IMR-90 (cell line): ENCODE measurements at regions of chr16 and their contacts with region 1.

Region 1: GRCh38 chr16:86563489-86564345 is 2.9 kb upstream of the FOXC2 start:
- DNase-seq: peak; percentile 89
- ATAC-seq: peak; percentile 70
- H3K4me3 ChIP-seq: peak overlapping the region; percentile 32
- H3K27ac ChIP-seq: 0 out of 2 replicates have a peak overlapping the region, but pooled peaks have one; percentile 18
- H3K4me1 ChIP-seq: peaks cover 2% of the 10 kb centered on the region; the same call in 1 of the 2 replicates
- H3K27me3 ChIP-seq: no peaks in the 10 kb centered on the region
- CTCF ChIP-seq: peak; percentile 100
- POLR2A ChIP-seq: peak; percentile 67
- RAD21 ChIP-seq: peak; percentile 100

Region 2: GRCh38 chr16:86882586-86883280 is 319.0 kb after region 1 on chr16:
- CTCF ChIA-PET with region 1: interaction called, 13 read pairs
- POLR2A ChIA-PET with region 1: no interaction called
- dilution Hi-C with region 1: no loop called
- in situ Hi-C with region 1: no loop called
- intact Hi-C with region 1: no loop called
- DNase-seq: peak; percentile 88
- ATAC-seq: peak; percentile 85
- H3K4me3 ChIP-seq: no peak overlapping the region
- H3K27ac ChIP-seq: no peak overlapping the region
- H3K4me1 ChIP-seq: peaks cover 5% of the 10 kb centered on the region
- H3K27me3 ChIP-seq: peaks cover 6% of the 10 kb centered on the region; the same call in 1 of the 2 replicates
- CTCF ChIP-seq: no peak
- POLR2A ChIP-seq: no peak
- RAD21 ChIP-seq: peak; percentile 27

Region 3: DNA sequence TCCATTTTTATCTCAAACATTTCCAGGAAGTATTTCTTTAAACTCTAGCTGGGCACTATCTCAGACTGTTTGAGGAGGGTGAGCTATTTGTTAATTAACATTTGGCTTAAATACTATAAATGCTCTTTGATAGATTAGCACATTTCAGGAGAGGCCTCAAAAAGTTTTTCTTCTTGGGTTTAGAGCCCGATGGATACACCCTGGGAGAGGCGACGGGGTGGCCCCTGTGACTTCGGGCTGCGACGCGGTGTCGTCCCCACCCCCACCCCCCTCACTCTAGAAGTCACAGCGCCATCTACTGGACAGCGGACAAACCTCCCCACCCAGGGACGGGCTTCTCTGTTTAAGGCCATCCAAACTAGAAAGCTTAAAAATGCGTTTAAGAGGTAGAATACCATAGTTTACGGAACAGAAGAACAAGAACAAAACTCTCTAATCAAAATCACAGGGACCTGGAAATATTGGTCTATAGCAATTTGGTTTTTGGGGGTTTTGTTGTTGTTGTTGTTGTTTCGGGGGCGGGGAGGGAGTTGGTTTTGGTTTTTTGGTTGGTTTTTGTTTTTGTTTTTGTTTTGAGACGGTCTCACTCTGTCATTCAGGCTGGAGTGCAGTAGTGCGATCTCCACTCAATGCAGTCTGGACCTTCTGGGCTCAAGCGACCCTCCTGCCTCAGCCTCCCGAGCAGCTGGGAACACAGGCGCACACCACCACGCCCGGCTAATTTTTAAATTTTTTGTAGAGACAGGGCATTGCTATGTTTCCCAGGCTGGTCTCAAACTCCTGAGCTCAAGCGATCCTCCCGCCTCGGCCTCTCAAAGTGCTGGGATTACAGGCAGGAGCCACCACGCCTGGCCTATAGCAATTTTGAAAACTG is 499.1 kb after region 1 on chr16:
- CTCF ChIA-PET with region 1: interaction called, 18 read pairs
- POLR2A ChIA-PET with region 1: no interaction called
- dilution Hi-C with region 1: no loop called
- in situ Hi-C with region 1: loop called (anchors 5 kb)
- intact Hi-C with region 1: loop called (anchors 1 kb)
- DNase-seq: peak; percentile 67
- ATAC-seq: peak; percentile 92
- H3K4me3 ChIP-seq: peak overlapping the region; percentile 26; the same call in 1 of the 2 replicates
- H3K27ac ChIP-seq: no peak overlapping the region
- H3K4me1 ChIP-seq: no peaks in the 10 kb centered on the region; the same call in 1 of the 2 replicates
- H3K27me3 ChIP-seq: no peaks in the 10 kb centered on the region; the same call in 1 of the 2 replicates
- CTCF ChIP-seq: peak; percentile 91
- POLR2A ChIP-seq: no peak
- RAD21 ChIP-seq: peak; percentile 90

Region 4: DNA sequence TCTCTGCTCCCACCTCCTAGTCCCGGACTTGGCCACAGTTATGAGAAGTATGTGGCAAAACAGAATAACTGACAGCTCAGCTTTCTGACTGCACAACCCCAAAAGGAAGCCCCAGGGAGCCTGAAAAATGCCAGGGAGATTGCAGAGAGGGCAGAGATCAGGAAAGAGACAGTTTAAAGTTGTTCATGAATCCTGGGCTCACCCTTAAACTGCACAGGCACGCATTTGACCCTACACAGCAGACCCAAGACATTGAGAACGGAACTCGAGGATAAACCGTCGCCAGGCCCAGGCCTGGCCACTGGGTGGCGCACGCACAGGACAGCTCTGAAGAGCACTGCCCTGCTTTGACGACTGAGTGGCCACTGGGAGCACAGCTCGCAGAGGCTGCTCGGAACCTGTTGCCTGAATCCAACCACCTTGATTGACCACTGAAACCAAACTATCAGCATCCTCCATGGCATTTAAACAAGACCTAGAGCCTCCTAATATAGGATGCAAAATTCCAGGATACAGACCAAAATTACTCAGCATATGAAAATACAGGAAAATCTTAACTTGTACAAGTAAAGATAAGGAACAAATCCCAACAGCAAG is 639.4 kb after region 1 on chr16:
- CTCF ChIA-PET with region 1: no interaction called
- POLR2A ChIA-PET with region 1: no interaction called
- dilution Hi-C with region 1: no loop called
- in situ Hi-C with region 1: no loop called
- intact Hi-C with region 1: loop called (anchors 1 kb)
- DNase-seq: peak; percentile 77
- ATAC-seq: peak; percentile 66
- H3K4me3 ChIP-seq: no peak overlapping the region
- H3K27ac ChIP-seq: peak overlapping the region; percentile 27
- H3K4me1 ChIP-seq: peaks cover 28% of the 10 kb centered on the region
- H3K27me3 ChIP-seq: no peaks in the 10 kb centered on the region
- CTCF ChIP-seq: peak; percentile 83
- POLR2A ChIP-seq: no peak
- RAD21 ChIP-seq: peak; percentile 65

Region 5: GRCh38 chr16:87278191-87279095 is 714.7 kb after region 1 on chr16:
- CTCF ChIA-PET with region 1: interaction called, 5 read pairs
- POLR2A ChIA-PET with region 1: no interaction called
- dilution Hi-C with region 1: no loop called
- in situ Hi-C with region 1: loop called (anchors 5 kb)
- intact Hi-C with region 1: loop called (anchors 1 kb)
- DNase-seq: peak; percentile 77
- ATAC-seq: peak; percentile 100
- H3K4me3 ChIP-seq: no peak overlapping the region
- H3K27ac ChIP-seq: no peak overlapping the region
- H3K4me1 ChIP-seq: no peaks in the 10 kb centered on the region; the same call in 1 of the 2 replicates
- H3K27me3 ChIP-seq: peaks cover 11% of the 10 kb centered on the region
- CTCF ChIP-seq: peak; percentile 94
- POLR2A ChIP-seq: no peak
- RAD21 ChIP-seq: peak; percentile 96

Region 6: GRCh38 chr16:87297918-87298631 is 734.4 kb after region 1 on chr16:
- CTCF ChIA-PET with region 1: no interaction called
- POLR2A ChIA-PET with region 1: no interaction called
- dilution Hi-C with region 1: no loop called
- in situ Hi-C with region 1: no loop called
- intact Hi-C with region 1: loop called (anchors 1 kb)
- DNase-seq: peak; percentile 10
- ATAC-seq: peak; percentile 85
- H3K4me3 ChIP-seq: no peak overlapping the region
- H3K27ac ChIP-seq: no peak overlapping the region
- H3K4me1 ChIP-seq: no peaks in the 10 kb centered on the region
- H3K27me3 ChIP-seq: no peaks in the 10 kb centered on the region
- CTCF ChIP-seq: peak; percentile 58
- POLR2A ChIP-seq: no peak
- RAD21 ChIP-seq: peak; percentile 46

Region 7: GRCh38 chr16:87383629-87384161 is 820.0 kb after region 1 on chr16 and contains the start of gene FBXO31:
- CTCF ChIA-PET with region 1: no interaction called
- POLR2A ChIA-PET with region 1: no interaction called
- dilution Hi-C with region 1: no loop called
- in situ Hi-C with region 1: no loop called
- intact Hi-C with region 1: loop called (anchors 5 kb)
- DNase-seq: peak; percentile 94
- ATAC-seq: peak; percentile 87
- H3K4me3 ChIP-seq: peak within 1 kb of the TSS; percentile 52
- H3K27ac ChIP-seq: peak within 1 kb of the TSS; percentile 72
- H3K4me1 ChIP-seq: peaks cover 16% of the 10 kb centered on the region
- H3K27me3 ChIP-seq: no peaks in the 10 kb centered on the region
- CTCF ChIP-seq: no peak; the same call in 1 of the 2 replicates
- POLR2A ChIP-seq: peak; percentile 69
- RAD21 ChIP-seq: no peak
- total RNA-seq, gene FBXO31: 10.4 and 10.6 TPM in 2 replicates